Activated CD8-positive, alpha-beta T cell treated with anti-CD3 and anti-CD28 coated beads for 36 hours (primary cell): ENCODE measurements at regions of chr10 and their contacts with region 1.

Region 1: GRCh38 chr10:30783939-30784500 is 154.5 kb upstream of the LYZL2 start:
- DNase-seq: peak; percentile 90
- ATAC-seq: peak; percentile 87
- H3K4me3 Mint-ChIP-seq: peak overlapping the region; percentile 70
- H3K27ac Mint-ChIP-seq: peak overlapping the region; percentile 71
- H3K4me1 Mint-ChIP-seq: peaks cover 17% of the 10 kb centered on the region
- H3K27me3 Mint-ChIP-seq: no peaks in the 10 kb centered on the region
- CTCF ChIP-seq: peak; percentile 95

Region 2: GRCh38 chr10:30751678-30752331 is 32.2 kb before region 1 on chr10:
- CTCF ChIA-PET with region 1: interaction called, 10 read pairs
- POLR2A ChIA-PET with region 1: no interaction called
- intact Hi-C with region 1: no loop called
- DNase-seq: no peak
- ATAC-seq: no peak
- H3K4me3 Mint-ChIP-seq: no peak overlapping the region
- H3K27ac Mint-ChIP-seq: peak overlapping the region; percentile 47
- H3K4me1 Mint-ChIP-seq: peaks cover 27% of the 10 kb centered on the region
- H3K27me3 Mint-ChIP-seq: no peaks in the 10 kb centered on the region
- CTCF ChIP-seq: no peak

Region 3: DNA sequence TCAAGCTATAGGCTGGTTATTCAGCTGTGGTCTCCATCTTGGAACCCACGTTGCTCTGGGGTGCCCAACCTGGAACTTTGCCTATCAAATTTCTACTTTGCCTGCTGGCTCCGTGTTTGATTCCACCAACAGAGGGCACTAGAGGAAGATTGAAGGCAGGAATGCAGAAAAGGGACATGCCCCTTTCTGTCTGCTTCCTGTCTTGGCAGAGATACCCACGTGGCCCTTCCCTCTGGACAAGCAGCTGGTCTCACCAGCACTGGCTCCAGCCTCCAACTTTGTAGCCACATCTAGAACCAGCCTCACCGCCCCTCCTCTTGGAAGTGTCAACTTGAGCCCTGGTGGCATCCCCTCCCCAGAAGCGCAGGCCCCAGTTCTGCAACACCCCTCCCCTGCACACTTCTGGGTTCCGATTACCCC is 299.8 kb after region 1 on chr10:
- CTCF ChIA-PET with region 1: interaction called, 28 read pairs
- POLR2A ChIA-PET with region 1: no interaction called
- intact Hi-C with region 1: no loop called
- DNase-seq: peak; percentile 80
- ATAC-seq: peak; percentile 88
- H3K4me3 Mint-ChIP-seq: no peak overlapping the region
- H3K27ac Mint-ChIP-seq: peak overlapping the region; percentile 66
- H3K4me1 Mint-ChIP-seq: peaks cover 5% of the 10 kb centered on the region
- H3K27me3 Mint-ChIP-seq: no peaks in the 10 kb centered on the region
- CTCF ChIP-seq: peak; percentile 57

Region 4: GRCh38 chr10:31490858-31491504 is 707.0 kb after region 1 on chr10:
- CTCF ChIA-PET with region 1: interaction called, 7 read pairs
- POLR2A ChIA-PET with region 1: no interaction called
- intact Hi-C with region 1: loop called (anchors 10 kb)
- DNase-seq: peak; percentile 37
- ATAC-seq: peak; percentile 56
- H3K4me3 Mint-ChIP-seq: no peak overlapping the region
- H3K27ac Mint-ChIP-seq: no peak overlapping the region
- H3K4me1 Mint-ChIP-seq: peaks cover 8% of the 10 kb centered on the region
- H3K27me3 Mint-ChIP-seq: no peaks in the 10 kb centered on the region
- CTCF ChIP-seq: peak; percentile 62